CD4-positive, alpha-beta memory T cell (primary cell): ENCODE measurements at regions of chr2 and their contacts with region 1.

Region 1: GRCh38 chr2:27303093-27304025 is 4.9 kb downstream of the UCN start:
- DNase-seq: peak in 4 of 5 donors; percentile 47 to 54 (median 50)
- H3K4me3 ChIP-seq: no peak overlapping the region
- H3K4me3 Mint-ChIP-seq: peak overlapping the region; percentile 64 to 84 (median 74)
- H3K27ac ChIP-seq: no peak overlapping the region
- H3K27ac Mint-ChIP-seq: peak overlapping the region in 5 of 7 donors; percentile 21 to 85 (median 75)
- H3K4me1 ChIP-seq: peaks cover 15% of the 10 kb centered on the region
- H3K4me1 Mint-ChIP-seq: peaks cover 0 to 9% (median 6%) of the 10 kb centered on the region in 4 donors
- H3K27me3 ChIP-seq: peaks cover 13% of the 10 kb centered on the region
- H3K27me3 Mint-ChIP-seq: peaks cover 18% of the 10 kb centered on the region in 2 donors

Region 2: DNA sequence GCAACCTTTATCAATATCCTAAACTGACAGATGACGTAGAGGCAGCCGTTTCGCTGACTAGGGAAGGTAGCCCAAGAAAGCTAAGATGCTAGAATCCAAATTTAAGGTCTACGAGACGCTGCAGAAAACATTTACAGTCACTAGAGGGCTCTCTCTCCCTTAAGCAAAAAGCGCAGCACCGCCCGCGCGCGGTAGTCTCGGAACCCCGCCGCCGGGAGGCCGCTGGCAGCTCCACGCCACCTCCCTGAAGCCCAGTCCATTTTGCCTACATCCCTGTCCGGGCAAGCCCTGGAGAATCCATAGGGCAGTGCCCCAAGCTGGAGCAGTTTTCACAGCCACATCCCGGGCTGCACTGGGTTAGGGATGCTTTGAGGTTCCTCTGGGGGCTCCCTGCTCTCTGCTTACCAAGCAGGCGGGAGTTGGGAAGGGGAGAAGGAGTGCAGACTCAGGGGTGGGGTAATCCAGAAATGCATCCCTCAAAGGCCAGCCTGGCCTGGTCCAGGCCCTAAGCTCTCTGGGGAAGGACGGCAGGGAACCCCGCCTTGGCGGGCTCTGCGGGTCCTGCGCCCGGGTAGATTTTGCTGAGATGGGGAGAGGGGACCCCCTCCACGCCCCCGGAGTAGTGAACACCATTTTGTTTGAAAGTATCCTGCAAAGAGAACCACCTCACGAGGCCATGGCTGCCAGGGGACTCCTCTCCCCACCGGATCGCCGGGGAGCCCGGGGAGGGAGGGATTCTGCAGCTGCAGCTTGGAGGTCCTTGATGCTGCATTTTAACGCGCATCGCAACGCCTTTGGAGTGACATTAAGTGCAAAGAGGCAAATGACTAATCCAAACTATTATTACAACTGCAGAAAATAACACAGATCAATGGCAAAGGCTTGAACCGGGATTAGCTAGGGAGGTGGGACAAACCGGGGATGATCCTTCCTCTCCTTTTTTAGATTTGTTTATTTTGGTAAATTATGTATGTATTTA is 456.7 kb before region 1 on chr2:
- CTCF ChIA-PET with region 1: interaction called, 13 read pairs
- POLR2A ChIA-PET with region 1: no interaction called
- intact Hi-C with region 1: no loop called
- DNase-seq: peak in 4 of 5 donors; percentile 49 to 59 (median 55)
- H3K4me3 ChIP-seq: no peak overlapping the region
- H3K4me3 Mint-ChIP-seq: peak overlapping the region; percentile 70 to 92 (median 78)
- H3K27ac ChIP-seq: no peak overlapping the region
- H3K27ac Mint-ChIP-seq: peak overlapping the region in 2 of 7 donors; percentile 16 to 73
- H3K4me1 ChIP-seq: peaks cover 38% of the 10 kb centered on the region
- H3K4me1 Mint-ChIP-seq: peaks cover 2 to 27% (median 8%) of the 10 kb centered on the region in 4 donors
- H3K27me3 ChIP-seq: peaks cover 43% of the 10 kb centered on the region
- H3K27me3 Mint-ChIP-seq: peaks cover 29 to 34% of the 10 kb centered on the region in 2 donors

Region 3: DNA sequence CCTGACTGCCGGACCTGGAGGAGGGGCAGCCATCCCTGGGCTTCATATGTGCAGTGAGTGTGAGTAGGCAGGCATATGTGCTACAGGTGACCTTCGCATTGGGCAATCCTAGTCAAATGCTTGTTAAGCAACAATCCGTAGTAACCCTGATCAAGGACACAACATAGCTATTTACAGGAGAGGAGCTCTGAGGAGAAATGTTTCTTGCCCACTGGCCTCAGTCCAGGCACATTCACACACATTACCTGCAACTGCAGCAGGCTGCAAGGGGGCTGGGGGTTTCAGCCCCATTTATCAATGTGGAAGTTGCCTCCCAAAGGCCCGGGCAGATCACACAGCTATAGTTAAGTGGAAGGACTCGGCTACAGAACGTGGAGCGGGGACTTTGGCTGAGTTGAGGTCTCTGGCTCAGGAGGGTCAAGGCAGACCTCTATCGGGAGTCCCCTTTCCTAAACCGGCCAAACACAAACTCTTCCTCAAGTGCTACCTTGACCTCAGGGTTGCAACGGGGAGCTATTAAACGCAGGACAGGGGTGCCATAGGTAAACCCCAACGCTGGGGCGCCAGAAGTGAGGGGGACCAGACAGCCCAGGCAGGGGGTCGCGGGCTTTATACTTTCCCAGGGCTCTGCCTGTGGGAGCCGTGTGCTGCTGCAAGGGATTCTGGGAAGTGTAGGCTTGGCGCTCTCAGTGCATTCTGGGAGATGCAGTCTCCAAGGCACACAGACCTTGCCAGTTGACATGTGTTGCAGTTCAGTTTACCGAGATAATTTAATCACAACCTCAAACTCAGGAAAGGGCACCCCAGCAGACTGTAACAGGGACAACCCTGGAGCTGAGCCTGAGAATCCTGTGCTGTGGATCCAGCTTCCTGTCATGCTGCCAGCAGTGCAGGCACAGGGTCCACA is 207.4 kb before region 1 on chr2:
- CTCF ChIA-PET with region 1: interaction called, 18 read pairs
- POLR2A ChIA-PET with region 1: no interaction called
- intact Hi-C with region 1: loop called (anchors 1 kb)
- DNase-seq: peak in 3 of 5 donors; percentile 34 to 39 (median 37)
- H3K4me3 ChIP-seq: no peak overlapping the region
- H3K4me3 Mint-ChIP-seq: peak overlapping the region in 7 of 8 donors; percentile 5 to 81 (median 61)
- H3K27ac ChIP-seq: no peak overlapping the region
- H3K27ac Mint-ChIP-seq: peak overlapping the region in 4 of 7 donors; percentile 35 to 84 (median 53)
- H3K4me1 ChIP-seq: peaks cover 9% of the 10 kb centered on the region
- H3K4me1 Mint-ChIP-seq: peaks cover 8 to 16% (median 10%) of the 10 kb centered on the region in 4 donors
- H3K27me3 ChIP-seq: no peaks in the 10 kb centered on the region
- H3K27me3 Mint-ChIP-seq: no peaks in the 10 kb centered on the region

Region 4: GRCh38 chr2:27174316-27175040 is 128.9 kb before region 1 on chr2:
- CTCF ChIA-PET with region 1: interaction called, 5 read pairs
- POLR2A ChIA-PET with region 1: no interaction called
- intact Hi-C with region 1: loop called (anchors 1 kb)
- DNase-seq: no peak
- H3K4me3 ChIP-seq: no peak overlapping the region
- H3K4me3 Mint-ChIP-seq: no peak overlapping the region
- H3K27ac ChIP-seq: no peak overlapping the region
- H3K27ac Mint-ChIP-seq: no peak overlapping the region
- H3K4me1 ChIP-seq: no peaks in the 10 kb centered on the region
- H3K4me1 Mint-ChIP-seq: peaks cover 4 to 6% (median 6%) of the 10 kb centered on the region in 4 donors
- H3K27me3 ChIP-seq: no peaks in the 10 kb centered on the region
- H3K27me3 Mint-ChIP-seq: peaks cover 24 to 28% of the 10 kb centered on the region in 2 donors

Region 5: GRCh38 chr2:27281855-27282559 is 21.4 kb before region 1 on chr2 and contains the start of gene TRIM54:
- CTCF ChIA-PET with region 1: interaction called, 23 read pairs
- POLR2A ChIA-PET with region 1: interaction called, 3 read pairs
- intact Hi-C with region 1: no loop called
- DNase-seq: no peak
- H3K4me3 ChIP-seq: no peak within 1 kb of the TSS
- H3K4me3 Mint-ChIP-seq: no peak within 1 kb of the TSS
- H3K27ac ChIP-seq: no peak within 1 kb of the TSS
- H3K27ac Mint-ChIP-seq: peak within 1 kb of the TSS in 1 of 7 donors; percentile 62
- H3K4me1 ChIP-seq: no peaks in the 10 kb centered on the region
- H3K4me1 Mint-ChIP-seq: peaks cover 0 to 4% (median 1%) of the 10 kb centered on the region in 4 donors
- H3K27me3 ChIP-seq: peaks cover 6% of the 10 kb centered on the region
- H3K27me3 Mint-ChIP-seq: peaks cover 11 to 25% of the 10 kb centered on the region in 2 donors
- total RNA-seq, gene TRIM54: 0.17 TPM in 1 of 2 experiments, not detected in the other

Region 6: GRCh38 chr2:27313882-27314645 is 10.7 kb after region 1 on chr2:
- CTCF ChIA-PET with region 1: interaction called, 29 read pairs
- POLR2A ChIA-PET with region 1: no interaction called
- intact Hi-C with region 1: no loop called
- DNase-seq: no peak
- H3K4me3 ChIP-seq: no peak overlapping the region
- H3K4me3 Mint-ChIP-seq: no peak overlapping the region
- H3K27ac ChIP-seq: no peak overlapping the region
- H3K27ac Mint-ChIP-seq: peak overlapping the region in 1 of 7 donors; percentile 37
- H3K4me1 ChIP-seq: no peaks in the 10 kb centered on the region
- H3K4me1 Mint-ChIP-seq: peaks cover 0 to 4% (median under 1%) of the 10 kb centered on the region in 4 donors
- H3K27me3 ChIP-seq: no peaks in the 10 kb centered on the region
- H3K27me3 Mint-ChIP-seq: no peaks in the 10 kb centered on the region

Region 7: DNA sequence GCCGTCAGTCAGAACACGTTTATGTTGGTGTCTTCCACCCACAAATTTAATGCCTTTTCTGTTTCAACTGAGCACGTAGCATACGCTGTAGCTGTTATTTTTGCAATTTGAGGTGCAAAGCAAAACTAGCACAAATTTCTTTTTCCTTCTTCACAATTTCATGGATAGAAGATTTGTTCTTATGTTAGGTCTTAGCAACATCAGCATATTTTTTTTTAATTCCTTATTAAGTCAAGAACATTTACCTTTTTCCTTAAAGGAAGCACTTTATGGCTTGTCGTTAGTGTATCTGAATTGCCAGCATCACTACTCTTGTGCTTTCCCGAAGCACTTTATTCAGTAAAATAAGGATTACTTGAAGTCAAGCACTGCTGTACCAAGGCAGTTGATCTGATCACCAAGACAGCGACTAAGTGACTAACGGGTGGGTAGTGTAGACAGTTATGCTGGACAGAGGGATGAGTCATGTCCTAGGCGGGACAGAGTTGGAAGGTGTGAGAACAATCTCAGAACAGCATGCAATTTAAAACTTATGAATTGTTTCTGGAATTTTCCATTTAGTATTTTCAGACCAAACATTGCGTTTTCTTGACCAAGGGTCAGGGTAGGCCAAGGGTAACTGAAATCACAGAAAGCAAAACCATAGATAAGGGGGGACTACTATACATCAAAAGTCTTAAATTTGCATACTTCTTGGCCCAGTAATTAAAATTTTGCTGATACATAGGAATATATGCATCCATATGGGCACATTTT is 600.5 kb after region 1 on chr2:
- CTCF ChIA-PET with region 1: no interaction called
- POLR2A ChIA-PET with region 1: no interaction called
- intact Hi-C with region 1: no loop called
- DNase-seq: no peak
- H3K4me3 ChIP-seq: no peak overlapping the region
- H3K4me3 Mint-ChIP-seq: no peak overlapping the region
- H3K27ac ChIP-seq: no peak overlapping the region
- H3K27ac Mint-ChIP-seq: peak overlapping the region in 1 of 7 donors; percentile 31
- H3K4me1 ChIP-seq: no peaks in the 10 kb centered on the region
- H3K4me1 Mint-ChIP-seq: peaks cover 19 to 28% (median 22%) of the 10 kb centered on the region in 4 donors
- H3K27me3 ChIP-seq: no peaks in the 10 kb centered on the region
- H3K27me3 Mint-ChIP-seq: no peaks in the 10 kb centered on the region